B cell (primary cell): ENCODE measurements at regions of chr7 and their contacts with region 1.

Region 1: GRCh38 chr7:23273141-23273599 is 26.0 kb upstream of the MALSU1 start:
- DNase-seq: peak; percentile 88
- ATAC-seq: peak; percentile 96
- H3K4me3 ChIP-seq: peak overlapping the region in 2 of 5 experiments; percentile 9 to 27
- H3K4me3 Mint-ChIP-seq: peak overlapping the region; percentile 72
- H3K27ac ChIP-seq: no peak overlapping the region
- H3K27ac Mint-ChIP-seq: peak overlapping the region; percentile 39
- H3K4me1 ChIP-seq: peaks cover 3 to 9% of the 10 kb centered on the region in 2 donors
- H3K4me1 Mint-ChIP-seq: peaks cover 4% of the 10 kb centered on the region
- H3K27me3 ChIP-seq: peaks cover 0 to 6% (median 0%) of the 10 kb centered on the region in 4 experiments
- H3K27me3 Mint-ChIP-seq: peaks cover 9% of the 10 kb centered on the region
- CTCF ChIP-seq: peak; percentile 90

Region 2: DNA sequence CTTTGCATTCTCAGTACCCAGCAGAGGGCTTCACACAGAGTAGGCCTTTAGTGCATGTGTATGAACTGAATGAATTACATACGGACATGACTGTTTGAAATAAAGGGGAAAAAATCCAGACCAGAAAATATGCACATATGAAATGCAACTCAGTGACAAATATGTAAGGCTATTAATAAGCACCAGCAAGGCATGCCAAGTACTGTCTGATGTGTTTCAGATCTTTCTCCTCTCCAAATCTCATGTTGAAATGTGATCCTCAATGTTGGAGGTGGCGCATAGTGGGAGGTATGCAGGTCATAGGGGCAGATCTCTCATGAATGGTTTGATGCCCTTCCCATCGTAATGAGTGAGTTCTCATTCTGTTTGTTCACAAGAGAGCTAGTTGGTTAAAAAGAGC is 363.3 kb before region 1 on chr7:
- CTCF ChIA-PET with region 1: no interaction called
- POLR2A ChIA-PET with region 1: no interaction called
- intact Hi-C with region 1: no loop called
- DNase-seq: no peak
- ATAC-seq: no peak
- H3K4me3 ChIP-seq: no peak overlapping the region
- H3K4me3 Mint-ChIP-seq: no peak overlapping the region
- H3K27ac ChIP-seq: no peak overlapping the region
- H3K27ac Mint-ChIP-seq: no peak overlapping the region
- H3K4me1 ChIP-seq: no peaks in the 10 kb centered on the region
- H3K4me1 Mint-ChIP-seq: no peaks in the 10 kb centered on the region
- H3K27me3 ChIP-seq: no peaks in the 10 kb centered on the region
- H3K27me3 Mint-ChIP-seq: no peaks in the 10 kb centered on the region
- CTCF ChIP-seq: no peak

Region 3: GRCh38 chr7:23062452-23062851 is 210.7 kb before region 1 on chr7:
- CTCF ChIA-PET with region 1: no interaction called
- POLR2A ChIA-PET with region 1: no interaction called
- intact Hi-C with region 1: no loop called
- DNase-seq: no peak
- ATAC-seq: no peak
- H3K4me3 ChIP-seq: no peak overlapping the region
- H3K4me3 Mint-ChIP-seq: no peak overlapping the region
- H3K27ac ChIP-seq: no peak overlapping the region
- H3K27ac Mint-ChIP-seq: no peak overlapping the region
- H3K4me1 ChIP-seq: no peaks in the 10 kb centered on the region
- H3K4me1 Mint-ChIP-seq: no peaks in the 10 kb centered on the region
- H3K27me3 ChIP-seq: no peaks in the 10 kb centered on the region
- H3K27me3 Mint-ChIP-seq: peaks cover 3% of the 10 kb centered on the region
- CTCF ChIP-seq: no peak

Region 4: GRCh38 chr7:23135755-23136154 is 137.4 kb before region 1 on chr7:
- CTCF ChIA-PET with region 1: no interaction called
- POLR2A ChIA-PET with region 1: no interaction called
- intact Hi-C with region 1: no loop called
- DNase-seq: no peak
- ATAC-seq: no peak
- H3K4me3 ChIP-seq: no peak overlapping the region
- H3K4me3 Mint-ChIP-seq: no peak overlapping the region
- H3K27ac ChIP-seq: no peak overlapping the region
- H3K27ac Mint-ChIP-seq: no peak overlapping the region
- H3K4me1 ChIP-seq: no peaks in the 10 kb centered on the region
- H3K4me1 Mint-ChIP-seq: no peaks in the 10 kb centered on the region
- H3K27me3 ChIP-seq: no peaks in the 10 kb centered on the region
- H3K27me3 Mint-ChIP-seq: no peaks in the 10 kb centered on the region
- CTCF ChIP-seq: no peak

Region 5: GRCh38 chr7:23261843-23262452 is 11.2 kb before region 1 on chr7:
- CTCF ChIA-PET with region 1: interaction called, 52 read pairs
- POLR2A ChIA-PET with region 1: no interaction called
- intact Hi-C with region 1: no loop called
- DNase-seq: peak; percentile 64
- ATAC-seq: peak; percentile 76
- H3K4me3 ChIP-seq: no peak overlapping the region
- H3K4me3 Mint-ChIP-seq: no peak overlapping the region
- H3K27ac ChIP-seq: no peak overlapping the region
- H3K27ac Mint-ChIP-seq: no peak overlapping the region
- H3K4me1 ChIP-seq: peaks cover 0 to 2% of the 10 kb centered on the region in 2 donors
- H3K4me1 Mint-ChIP-seq: no peaks in the 10 kb centered on the region
- H3K27me3 ChIP-seq: peaks cover 0 to 3% (median 0%) of the 10 kb centered on the region in 4 experiments
- H3K27me3 Mint-ChIP-seq: peaks cover 11% of the 10 kb centered on the region
- CTCF ChIP-seq: peak; percentile 85

Region 6: DNA sequence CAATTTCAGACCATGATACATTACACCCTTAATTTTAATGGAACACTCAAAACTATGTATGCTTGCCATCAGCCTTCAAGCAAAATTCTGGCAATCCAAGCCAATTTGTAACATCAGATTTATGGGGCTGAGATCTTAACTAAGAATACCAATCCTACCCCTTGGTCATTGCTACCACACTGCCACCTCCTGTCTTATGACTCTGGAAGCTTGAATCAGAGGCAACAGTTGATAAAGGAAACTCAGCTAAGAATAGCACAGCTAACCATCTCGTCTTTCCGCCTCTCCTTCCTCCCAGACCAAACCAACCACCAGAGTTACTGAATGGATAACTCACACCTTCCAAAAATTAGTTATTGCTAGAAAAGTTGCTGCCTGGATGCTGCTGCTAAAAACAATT is 189.7 kb after region 1 on chr7:
- CTCF ChIA-PET with region 1: interaction called, 29 read pairs
- POLR2A ChIA-PET with region 1: no interaction called
- intact Hi-C with region 1: loop called (anchors 1 kb)
- DNase-seq: peak; percentile 49
- ATAC-seq: no peak
- H3K4me3 ChIP-seq: no peak overlapping the region
- H3K4me3 Mint-ChIP-seq: no peak overlapping the region
- H3K27ac ChIP-seq: no peak overlapping the region
- H3K27ac Mint-ChIP-seq: no peak overlapping the region
- H3K4me1 ChIP-seq: peaks cover 6 to 8% of the 10 kb centered on the region in 2 donors
- H3K4me1 Mint-ChIP-seq: peaks cover 14% of the 10 kb centered on the region
- H3K27me3 ChIP-seq: peaks cover 0 to 33% (median 26%) of the 10 kb centered on the region in 4 experiments
- H3K27me3 Mint-ChIP-seq: peaks cover 40% of the 10 kb centered on the region
- CTCF ChIP-seq: peak; percentile 36

Region 7: DNA sequence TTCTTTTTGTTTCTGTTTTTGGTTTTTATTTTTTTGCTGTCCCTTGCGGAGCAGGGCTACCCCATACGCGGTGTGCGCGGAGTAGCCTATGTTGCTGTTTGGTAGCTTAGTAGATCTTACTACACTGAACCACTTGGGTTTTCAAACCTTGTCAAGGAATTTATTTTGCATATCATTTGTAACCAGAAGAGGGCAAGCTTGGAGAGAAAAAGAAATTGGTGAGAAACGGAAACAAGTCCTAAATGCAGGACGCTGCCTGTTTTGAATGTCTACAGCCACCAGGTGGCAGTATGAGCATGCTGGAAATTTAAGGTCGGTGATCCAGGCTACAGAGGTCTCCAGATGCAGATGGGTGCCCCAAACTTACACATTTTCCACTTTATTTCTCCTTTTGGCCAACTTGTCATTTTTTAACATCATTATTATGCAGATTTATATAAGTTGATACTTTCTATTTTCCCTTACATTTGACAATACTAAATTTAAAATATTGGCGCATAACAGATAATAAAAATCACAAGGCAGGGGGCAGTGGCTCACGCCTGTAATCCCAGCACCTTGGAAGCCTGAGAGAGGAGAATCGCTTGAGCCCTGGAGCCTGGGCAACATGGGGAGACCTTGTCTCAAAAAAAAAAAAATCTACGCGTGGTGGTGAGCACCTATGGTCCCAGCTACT is 273.9 kb after region 1 on chr7:
- CTCF ChIA-PET with region 1: interaction called, 10 read pairs
- POLR2A ChIA-PET with region 1: no interaction called
- intact Hi-C with region 1: loop called (anchors 1 kb)
- DNase-seq: peak; percentile 90
- ATAC-seq: peak; percentile 91
- H3K4me3 ChIP-seq: peak overlapping the region in 1 of 5 experiments; percentile 18
- H3K4me3 Mint-ChIP-seq: no peak overlapping the region
- H3K27ac ChIP-seq: no peak overlapping the region
- H3K27ac Mint-ChIP-seq: no peak overlapping the region
- H3K4me1 ChIP-seq: peaks cover 8 to 13% of the 10 kb centered on the region in 2 donors
- H3K4me1 Mint-ChIP-seq: peaks cover 15% of the 10 kb centered on the region
- H3K27me3 ChIP-seq: no peaks in the 10 kb centered on the region
- H3K27me3 Mint-ChIP-seq: no peaks in the 10 kb centered on the region
- CTCF ChIP-seq: peak; percentile 98